HCT116 (cell line): ENCODE measurements at regions of chr12 and their contacts with region 1.

Region 1: GRCh38 chr12:93569656-93570551 is 2.6 kb upstream of the SOCS2 start:
- DNase-seq: peak; percentile 72
- ATAC-seq: peak; percentile 75
- H3K4me3 ChIP-seq: peak overlapping the region; percentile 72 to 73
- H3K27ac ChIP-seq: peak overlapping the region; percentile 93
- H3K4me1 ChIP-seq: peaks cover 2 to 24% of the 10 kb centered on the region in 2 experiments; a peak in 3 of 4 replicates
- H3K27me3 ChIP-seq: no peaks in the 10 kb centered on the region
- CTCF ChIP-seq: peak; percentile 73 to 84 (median 78)
- POLR2A ChIP-seq: no peak
- RAD21 ChIP-seq: peak; percentile 91

Region 2: GRCh38 chr12:93582116-93582772 is 12.3 kb after region 1 on chr12:
- CTCF ChIA-PET with region 1: no interaction called
- POLR2A ChIA-PET with region 1: no interaction called
- RAD21 ChIA-PET with region 1: no interaction called
- intact Hi-C with region 1: no loop called
- DNase-seq: no peak
- ATAC-seq: no peak
- H3K4me3 ChIP-seq: no peak overlapping the region
- H3K27ac ChIP-seq: no peak overlapping the region
- H3K4me1 ChIP-seq: no peaks in the 10 kb centered on the region
- H3K27me3 ChIP-seq: no peaks in the 10 kb centered on the region
- CTCF ChIP-seq: no peak
- POLR2A ChIP-seq: no peak
- RAD21 ChIP-seq: no peak

Region 3: GRCh38 chr12:93677195-93678064 is 107.5 kb after region 1 on chr12 and contains the start of gene CRADD:
- CTCF ChIA-PET with region 1: no interaction called
- POLR2A ChIA-PET with region 1: no interaction called
- RAD21 ChIA-PET with region 1: no interaction called
- intact Hi-C with region 1: loop called (anchors 2 kb)
- DNase-seq: peak; percentile 97
- ATAC-seq: peak; percentile 86
- H3K4me3 ChIP-seq: peak within 1 kb of the TSS; percentile 83
- H3K27ac ChIP-seq: peak within 1 kb of the TSS; percentile 87
- H3K4me1 ChIP-seq: peaks cover 7 to 17% of the 10 kb centered on the region in 2 experiments; a peak in 2 of 4 replicates
- H3K27me3 ChIP-seq: no peaks in the 10 kb centered on the region
- CTCF ChIP-seq: no peak
- POLR2A ChIP-seq: peak; percentile 79
- RAD21 ChIP-seq: 0 out of 2 replicates have a peak, but pooled peaks have one; percentile 27
- total RNA-seq, gene CRADD: 12.2 TPM

Region 4: DNA sequence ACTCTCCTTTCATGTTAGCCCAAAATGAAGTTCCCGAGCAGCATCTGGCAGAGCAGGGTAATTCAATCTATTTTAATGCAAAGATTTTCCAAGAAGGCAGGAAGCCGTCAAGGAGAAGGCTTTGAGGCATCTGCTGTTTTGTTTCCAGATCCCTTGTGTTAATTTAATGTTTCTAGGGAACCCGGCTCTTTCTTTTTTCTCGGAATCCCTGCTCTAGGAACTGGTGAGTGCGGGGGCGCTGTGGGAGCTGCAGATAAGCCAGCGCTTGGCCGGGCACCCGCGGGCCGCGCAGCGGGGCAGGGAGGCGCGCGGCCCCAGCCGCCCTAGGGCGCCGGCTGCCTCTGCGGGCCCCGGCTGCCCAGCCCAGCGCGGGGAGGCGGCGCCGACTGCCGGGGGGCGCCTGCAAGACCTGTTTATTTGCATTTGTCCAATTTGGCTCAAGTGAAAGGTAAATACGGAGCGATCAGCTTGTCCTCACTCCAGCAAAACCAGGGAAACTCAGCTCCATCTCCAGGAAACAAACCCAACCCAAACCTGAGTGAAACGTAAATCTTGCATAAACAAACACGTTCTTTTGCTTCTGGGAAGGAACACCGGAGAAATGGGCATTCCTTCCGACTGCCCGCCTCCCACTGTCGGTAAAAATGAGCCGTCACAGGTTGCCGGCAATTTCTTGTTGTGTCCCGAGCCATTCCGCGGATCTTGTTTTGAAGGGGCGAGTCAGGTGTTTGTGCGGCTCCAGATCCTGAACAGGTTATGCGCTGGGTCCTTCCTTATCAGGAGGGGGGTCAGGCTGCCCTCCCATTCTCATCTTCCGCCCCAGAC is 172.4 kb after region 1 on chr12:
- CTCF ChIA-PET with region 1: no interaction called
- POLR2A ChIA-PET with region 1: no interaction called
- RAD21 ChIA-PET with region 1: no interaction called
- intact Hi-C with region 1: loop called (anchors 1 kb)
- DNase-seq: peak; percentile 29
- ATAC-seq: peak; percentile 97
- H3K4me3 ChIP-seq: peak overlapping the region; percentile 64
- H3K27ac ChIP-seq: peak overlapping the region; percentile 41
- H3K4me1 ChIP-seq: peaks cover 7 to 26% of the 10 kb centered on the region in 2 experiments; a peak in 3 of 4 replicates
- H3K27me3 ChIP-seq: no peaks in the 10 kb centered on the region
- CTCF ChIP-seq: peak; percentile 11 to 36 (median 13); a peak in 3 of 6 replicates
- POLR2A ChIP-seq: no peak
- RAD21 ChIP-seq: peak; percentile 63

Region 5: GRCh38 chr12:93785262-93786010 is 215.5 kb after region 1 on chr12:
- CTCF ChIA-PET with region 1: no interaction called
- POLR2A ChIA-PET with region 1: no interaction called
- RAD21 ChIA-PET with region 1: no interaction called
- intact Hi-C with region 1: loop called (anchors 10 kb)
- DNase-seq: peak; percentile 85
- ATAC-seq: peak; percentile 88
- H3K4me3 ChIP-seq: peak overlapping the region in 1 of 2 experiments; percentile 14; a peak in 2 of 4 replicates
- H3K27ac ChIP-seq: peak overlapping the region; percentile 88
- H3K4me1 ChIP-seq: peaks cover 40 to 78% of the 10 kb centered on the region in 2 experiments
- H3K27me3 ChIP-seq: no peaks in the 10 kb centered on the region
- CTCF ChIP-seq: no peak
- POLR2A ChIP-seq: no peak
- RAD21 ChIP-seq: no peak

Region 6: GRCh38 chr12:93979189-93979588 is 409.3 kb after region 1 on chr12:
- CTCF ChIA-PET with region 1: interaction called, 5 read pairs
- POLR2A ChIA-PET with region 1: no interaction called
- RAD21 ChIA-PET with region 1: interaction called in 1 of 2 experiments, 4 read pairs
- intact Hi-C with region 1: loop called (anchors 1 kb)
- DNase-seq: peak; percentile 28
- ATAC-seq: peak; percentile 65
- H3K4me3 ChIP-seq: no peak overlapping the region
- H3K27ac ChIP-seq: no peak overlapping the region
- H3K4me1 ChIP-seq: no peaks in the 10 kb centered on the region
- H3K27me3 ChIP-seq: no peaks in the 10 kb centered on the region
- CTCF ChIP-seq: peak; percentile 47 to 68 (median 61)
- POLR2A ChIP-seq: no peak
- RAD21 ChIP-seq: peak; percentile 88